Endothelial cell of umbilical vein (primary cell): ENCODE measurements at regions of chr14 and their contacts with region 1.

Region 1: GRCh38 chr14:61326847-61327246 is 5.5 kb downstream of the PRKCH start:
- DNase-seq: peak; percentile 97
- H3K4me3 ChIP-seq: peak overlapping the region in 1 of 3 experiments; percentile 56
- H3K27ac ChIP-seq: peak overlapping the region; percentile 92
- H3K4me1 ChIP-seq: peaks cover 33% of the 10 kb centered on the region
- H3K27me3 ChIP-seq: no peaks in the 10 kb centered on the region
- CTCF ChIP-seq: no peak
- POLR2A ChIP-seq: peak; percentile 41

Region 2: GRCh38 chr14:61218767-61219166 is 108.1 kb before region 1 on chr14:
- CTCF ChIA-PET with region 1: no interaction called
- POLR2A ChIA-PET with region 1: no interaction called
- dilution Hi-C with region 1: no loop called
- intact Hi-C with region 1: no loop called
- DNase-seq: no peak
- H3K4me3 ChIP-seq: no peak overlapping the region
- H3K27ac ChIP-seq: no peak overlapping the region
- H3K4me1 ChIP-seq: no peaks in the 10 kb centered on the region
- H3K27me3 ChIP-seq: peaks cover 6 to 10% of the 10 kb centered on the region in 2 experiments
- CTCF ChIP-seq: no peak
- POLR2A ChIP-seq: no peak

Region 3: GRCh38 chr14:61308198-61308597 is 18.6 kb before region 1 on chr14:
- CTCF ChIA-PET with region 1: interaction called, 18 read pairs
- POLR2A ChIA-PET with region 1: interaction called, 9 read pairs
- dilution Hi-C with region 1: no loop called
- intact Hi-C with region 1: loop called (anchors 1 kb)
- DNase-seq: peak; percentile 96
- H3K4me3 ChIP-seq: no peak overlapping the region
- H3K27ac ChIP-seq: peak overlapping the region; percentile 89
- H3K4me1 ChIP-seq: peaks cover 28% of the 10 kb centered on the region
- H3K27me3 ChIP-seq: no peaks in the 10 kb centered on the region
- CTCF ChIP-seq: no peak
- POLR2A ChIP-seq: peak; percentile 84

Region 4: DNA sequence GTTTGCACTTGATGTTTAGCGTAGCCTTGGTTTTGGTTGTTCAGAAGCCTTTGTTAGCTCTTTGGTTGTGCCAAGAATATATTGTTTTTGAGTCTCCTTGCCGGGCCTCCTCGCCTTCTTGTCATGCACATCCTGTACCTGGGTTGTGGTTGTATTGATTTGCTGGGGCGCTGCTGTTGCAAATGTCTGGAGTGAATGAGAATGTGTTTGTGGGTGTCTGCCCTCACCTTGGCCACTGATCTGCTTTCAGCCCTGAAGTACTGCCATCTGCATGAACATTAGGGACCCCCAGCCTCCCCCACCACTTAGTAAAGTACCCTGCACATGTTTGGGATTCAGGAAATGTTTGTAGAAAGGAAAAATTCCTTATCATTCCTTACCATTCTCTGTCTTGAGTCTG is 11.0 kb after region 1 on chr14:
- CTCF ChIA-PET with region 1: interaction called, 8 read pairs
- POLR2A ChIA-PET with region 1: interaction called, 3 read pairs
- dilution Hi-C with region 1: no loop called
- intact Hi-C with region 1: loop called (anchors 1 kb)
- DNase-seq: peak; percentile 86
- H3K4me3 ChIP-seq: no peak overlapping the region
- H3K27ac ChIP-seq: peak overlapping the region; percentile 93
- H3K4me1 ChIP-seq: peaks cover 74% of the 10 kb centered on the region
- H3K27me3 ChIP-seq: no peaks in the 10 kb centered on the region
- CTCF ChIP-seq: no peak
- POLR2A ChIP-seq: no peak

Region 5: DNA sequence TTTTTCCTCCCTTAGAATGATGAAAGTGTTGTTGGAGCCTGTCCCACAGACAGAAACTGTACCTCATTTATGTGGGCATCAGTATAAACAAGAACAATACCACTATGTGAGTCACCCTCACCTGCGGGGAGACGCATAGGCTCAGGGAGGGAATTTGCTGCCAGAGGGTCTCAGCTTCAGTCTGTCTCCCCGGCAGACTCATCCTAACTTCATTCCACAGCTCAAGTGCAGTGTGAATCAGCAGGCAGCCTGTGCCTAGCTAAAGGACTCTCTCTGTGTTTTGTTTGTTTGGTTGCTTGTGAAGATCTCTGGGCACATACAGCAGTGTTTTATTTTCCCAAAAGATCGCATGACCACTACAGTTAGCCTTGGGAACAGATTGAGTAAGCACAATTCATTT is 93.5 kb after region 1 on chr14:
- CTCF ChIA-PET with region 1: interaction called, 4 read pairs
- POLR2A ChIA-PET with region 1: no interaction called
- dilution Hi-C with region 1: no loop called
- intact Hi-C with region 1: loop called (anchors 2 kb)
- DNase-seq: peak; percentile 43
- H3K4me3 ChIP-seq: no peak overlapping the region
- H3K27ac ChIP-seq: no peak overlapping the region
- H3K4me1 ChIP-seq: peaks cover 46% of the 10 kb centered on the region
- H3K27me3 ChIP-seq: no peaks in the 10 kb centered on the region
- CTCF ChIP-seq: no peak
- POLR2A ChIP-seq: no peak